ENCODE measurements at regions of chr4 and their contacts with region 1.

Region 1: GRCh38 chr4:176044589-176044951 is 21.1 kb upstream of the WDR17 start:
- DNase-seq: no peak
- ATAC-seq: no peak
- H3K4me3 ChIP-seq: no peak overlapping the region
- H3K27ac ChIP-seq: no peak overlapping the region
- H3K4me1 ChIP-seq: no peaks in the 10 kb centered on the region
- CTCF ChIP-seq: no peak
- EP300 ChIP-seq: no peak
- POLR2A ChIP-seq: no peak
- RAD21 ChIP-seq: no peak

Region 2: DNA sequence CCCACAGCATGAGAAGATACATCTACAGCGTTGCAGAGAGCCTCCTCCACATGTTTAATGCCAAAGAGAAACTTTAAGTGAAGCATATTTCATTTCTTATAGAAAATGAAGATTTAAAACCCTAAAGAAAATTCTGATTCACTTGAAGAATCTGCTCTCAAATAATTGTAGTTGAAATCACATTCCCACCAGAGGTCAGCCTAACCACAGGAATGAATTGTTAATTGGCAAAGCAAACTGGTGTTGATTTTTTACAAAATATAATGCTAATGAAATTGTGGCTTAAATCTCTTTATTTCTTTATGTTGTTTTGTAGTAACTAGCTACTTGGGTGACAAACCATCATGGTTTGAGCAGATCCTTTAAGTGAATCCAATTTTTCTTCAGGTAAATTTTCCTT is 10.1 kb before region 1 on chr4:
- CTCF ChIA-PET with region 1: interaction called, 10 read pairs
- POLR2A ChIA-PET with region 1: no interaction called
- DNase-seq: peak in 1 of 2 experiments; percentile 27
- ATAC-seq: no peak
- H3K4me3 ChIP-seq: no peak overlapping the region
- H3K27ac ChIP-seq: no peak overlapping the region
- H3K4me1 ChIP-seq: no peaks in the 10 kb centered on the region
- CTCF ChIP-seq: peak; percentile 56
- EP300 ChIP-seq: no peak
- POLR2A ChIP-seq: no peak
- RAD21 ChIP-seq: peak; percentile 64 to 76

Region 3: DNA sequence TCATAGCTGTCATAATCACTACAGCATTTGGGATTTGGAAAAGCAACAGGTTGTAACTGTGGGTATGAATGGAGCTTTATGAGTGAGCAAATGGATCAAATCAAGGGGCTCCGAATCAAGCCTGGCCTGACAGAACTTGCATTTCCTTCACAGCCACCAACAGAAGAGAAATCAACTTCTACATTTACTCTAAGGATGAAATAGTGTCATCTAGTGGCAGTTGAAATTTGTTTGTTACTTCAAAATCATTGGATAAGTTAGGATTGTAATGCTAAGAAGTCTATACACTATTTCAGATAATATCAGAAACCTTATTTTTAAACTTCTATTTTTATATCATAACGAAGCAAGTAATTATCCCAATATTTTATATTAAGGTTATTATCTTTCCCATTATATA is 10.4 kb after region 1 on chr4:
- CTCF ChIA-PET with region 1: interaction called, 10 read pairs
- POLR2A ChIA-PET with region 1: no interaction called
- DNase-seq: no peak
- ATAC-seq: no peak
- H3K4me3 ChIP-seq: no peak overlapping the region
- H3K27ac ChIP-seq: no peak overlapping the region
- H3K4me1 ChIP-seq: no peaks in the 10 kb centered on the region
- CTCF ChIP-seq: peak; percentile 23; the same call in 1 of the 3 replicates
- EP300 ChIP-seq: no peak
- POLR2A ChIP-seq: no peak
- RAD21 ChIP-seq: peak; percentile 22 to 23; a peak in 1 of 5 replicates